Activated naive CD4-positive, alpha-beta T cell treated with anti-CD3 and anti-CD28 coated beads for 36 hours (primary cell): ENCODE measurements at regions of chr2 and their contacts with region 1.

Region 1: GRCh38 chr2:54106631-54107454 is 8.6 kb upstream of the ACYP2 start:
- DNase-seq: peak; percentile 71
- H3K4me3 Mint-ChIP-seq: no peak overlapping the region
- H3K27ac Mint-ChIP-seq: no peak overlapping the region
- H3K4me1 Mint-ChIP-seq: peaks cover 7% of the 10 kb centered on the region
- H3K27me3 Mint-ChIP-seq: no peaks in the 10 kb centered on the region

Region 2: DNA sequence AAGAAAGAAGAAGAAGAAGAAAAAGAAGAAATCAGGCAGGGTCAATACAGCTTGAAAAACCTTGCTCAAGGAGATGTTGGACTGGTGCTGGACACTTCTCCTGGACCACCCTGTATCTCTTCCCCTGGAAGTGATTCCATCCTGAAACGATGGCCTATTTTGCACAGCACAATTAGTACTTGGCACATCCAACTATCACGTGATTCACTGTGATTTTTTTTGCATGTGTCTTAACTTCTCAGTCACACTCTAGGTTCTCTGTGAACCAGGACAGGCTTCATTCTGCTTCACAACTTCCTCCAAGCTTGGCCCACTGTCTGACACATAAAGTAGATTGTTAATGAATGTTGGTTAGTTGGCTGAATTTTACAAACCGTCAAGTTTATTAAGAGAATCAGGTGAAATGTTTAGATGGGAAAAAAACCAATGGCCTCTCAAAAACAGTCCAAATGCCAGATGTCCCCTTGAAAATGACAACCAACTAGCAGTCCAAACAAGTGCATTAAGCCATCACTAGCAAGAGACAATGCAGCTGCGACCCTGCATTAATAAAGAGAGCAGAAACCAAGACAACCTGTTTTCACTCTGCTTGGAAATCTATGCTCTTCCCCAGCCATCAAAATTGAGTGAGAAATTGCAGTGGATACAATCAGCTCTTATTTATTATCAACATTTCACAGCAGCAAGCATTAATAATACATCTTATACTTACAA is 639.2 kb before region 1 on chr2:
- CTCF ChIA-PET with region 1: no interaction called
- intact Hi-C with region 1: no loop called
- DNase-seq: no peak
- H3K4me3 Mint-ChIP-seq: no peak overlapping the region
- H3K27ac Mint-ChIP-seq: no peak overlapping the region
- H3K4me1 Mint-ChIP-seq: no peaks in the 10 kb centered on the region
- H3K27me3 Mint-ChIP-seq: peaks cover 6% of the 10 kb centered on the region

Region 3: GRCh38 chr2:54041135-54041534 is 65.7 kb before region 1 on chr2:
- CTCF ChIA-PET with region 1: no interaction called
- intact Hi-C with region 1: no loop called
- DNase-seq: peak; percentile 73
- H3K4me3 Mint-ChIP-seq: no peak overlapping the region
- H3K27ac Mint-ChIP-seq: no peak overlapping the region
- H3K4me1 Mint-ChIP-seq: no peaks in the 10 kb centered on the region
- H3K27me3 Mint-ChIP-seq: no peaks in the 10 kb centered on the region

Region 4: DNA sequence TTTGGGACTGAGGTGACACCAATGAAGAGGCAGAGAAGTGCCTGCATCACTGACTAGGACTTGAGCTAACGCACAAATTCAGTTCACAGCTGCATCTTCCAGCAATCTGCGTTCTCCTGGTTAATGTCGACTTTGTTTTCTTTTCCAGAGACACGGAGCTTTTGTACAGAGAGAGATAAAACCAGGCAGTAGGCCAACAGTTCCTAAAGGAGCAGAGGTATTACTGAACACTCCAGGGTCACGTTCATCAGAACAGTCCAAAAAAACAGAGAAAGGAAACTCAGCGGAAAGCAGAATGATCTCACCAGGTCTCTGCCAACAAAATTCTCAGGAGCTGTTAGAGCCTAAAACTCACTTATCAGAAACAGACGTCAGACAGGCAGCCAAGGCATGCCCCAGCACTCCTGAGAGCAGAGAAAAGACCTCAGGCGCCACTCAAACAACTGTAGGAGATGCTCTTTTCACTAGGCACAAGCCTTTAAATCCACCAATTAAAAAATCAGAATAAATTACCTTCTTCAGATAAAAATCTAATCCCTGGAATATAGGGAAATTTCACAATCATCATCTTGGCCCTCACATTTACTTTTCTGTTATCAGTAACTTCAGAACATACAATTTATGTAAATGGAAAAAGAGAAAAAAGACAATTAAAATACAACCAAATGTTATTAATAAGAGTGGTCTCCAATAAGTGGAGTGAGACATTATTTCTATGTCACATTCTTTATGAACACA is 253.4 kb after region 1 on chr2:
- CTCF ChIA-PET with region 1: no interaction called
- intact Hi-C with region 1: loop called (anchors 1 kb)
- DNase-seq: no peak
- H3K4me3 Mint-ChIP-seq: no peak overlapping the region
- H3K27ac Mint-ChIP-seq: no peak overlapping the region
- H3K4me1 Mint-ChIP-seq: no peaks in the 10 kb centered on the region
- H3K27me3 Mint-ChIP-seq: peaks cover 23% of the 10 kb centered on the region

Region 5: GRCh38 chr2:54446122-54446521 is 339.3 kb after region 1 on chr2:
- CTCF ChIA-PET with region 1: no interaction called
- intact Hi-C with region 1: no loop called
- DNase-seq: no peak
- H3K4me3 Mint-ChIP-seq: no peak overlapping the region
- H3K27ac Mint-ChIP-seq: no peak overlapping the region
- H3K4me1 Mint-ChIP-seq: no peaks in the 10 kb centered on the region
- H3K27me3 Mint-ChIP-seq: no peaks in the 10 kb centered on the region